Gastrocnemius medialis (tissue), 4 donors: ENCODE measurements at regions of chr6 and their contacts with region 1.

Region 1: DNA sequence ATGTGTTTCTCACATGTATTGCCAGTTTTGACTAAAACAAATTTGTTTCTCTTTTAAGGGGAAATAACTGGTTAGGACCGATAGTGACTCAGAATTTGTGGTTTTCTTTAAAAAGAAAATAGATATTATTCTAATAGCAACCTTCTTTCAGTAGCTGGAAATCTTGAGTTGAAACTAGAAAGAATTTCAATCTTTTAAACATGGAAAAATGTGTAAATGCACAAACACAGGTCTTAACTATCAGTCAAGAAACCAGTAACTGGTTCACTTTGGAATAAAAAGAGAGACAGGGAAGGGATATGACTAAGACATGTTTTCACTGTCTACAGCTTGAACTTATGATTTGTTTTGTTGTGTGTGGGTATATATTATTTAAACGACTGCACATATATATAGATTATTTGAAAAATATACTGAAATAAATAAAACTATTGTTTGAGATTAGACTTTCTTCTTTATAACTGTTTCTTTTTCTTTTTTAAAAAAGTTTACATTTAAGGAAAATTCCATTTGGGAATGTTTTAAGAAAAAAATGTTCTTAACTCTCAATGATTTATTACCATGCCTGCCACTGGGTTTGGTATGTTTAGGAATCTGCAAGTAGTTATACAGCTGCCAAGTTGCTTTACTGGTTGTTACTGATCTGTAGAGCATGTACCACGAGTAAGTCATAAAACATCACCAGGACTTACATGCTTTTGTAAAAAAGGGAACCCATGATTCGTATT is 753.3 kb upstream of the MARCKS start:
- DNase-seq: no peak
- ATAC-seq: no peak
- H3K4me3 ChIP-seq: no peak overlapping the region
- H3K27ac ChIP-seq: no peak overlapping the region
- H3K4me1 ChIP-seq: peaks cover 0 to 8% of the 10 kb centered on the region in 2 donors
- H3K27me3 ChIP-seq: no peaks in the 10 kb centered on the region
- CTCF ChIP-seq: no peak
- POLR2A ChIP-seq: no peak

Region 2: DNA sequence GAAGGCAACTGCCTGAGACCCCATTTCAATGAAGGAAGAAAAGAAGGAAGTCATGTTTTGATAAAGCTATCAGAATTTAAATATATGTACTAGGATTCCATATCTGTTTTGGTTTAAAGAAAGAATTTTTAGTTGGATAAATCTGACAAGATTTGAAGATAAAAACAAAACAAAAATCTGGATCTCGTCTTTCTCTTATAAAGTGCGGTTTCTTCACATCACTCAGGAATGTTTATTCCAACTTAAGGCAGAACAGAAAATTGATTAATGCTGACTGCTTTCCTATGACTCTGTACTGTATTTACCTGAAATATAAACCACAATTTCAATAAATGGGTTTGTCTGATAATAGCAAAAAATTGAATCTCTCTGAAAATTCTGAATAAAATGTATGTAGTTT is 317.0 kb before region 1 on chr6:
- in situ Hi-C with region 1: no loop called
- intact Hi-C with region 1: no loop called
- DNase-seq: no peak
- ATAC-seq: no peak
- H3K4me3 ChIP-seq: no peak overlapping the region
- H3K27ac ChIP-seq: no peak overlapping the region
- H3K4me1 ChIP-seq: no peaks in the 10 kb centered on the region
- H3K27me3 ChIP-seq: no peaks in the 10 kb centered on the region
- CTCF ChIP-seq: no peak
- POLR2A ChIP-seq: no peak

Region 3: GRCh38 chr6:112865120-112865519 is 238.7 kb before region 1 on chr6:
- in situ Hi-C with region 1: no loop called
- intact Hi-C with region 1: no loop called
- DNase-seq: no peak
- ATAC-seq: no peak
- H3K4me3 ChIP-seq: no peak overlapping the region
- H3K27ac ChIP-seq: no peak overlapping the region
- H3K4me1 ChIP-seq: no peaks in the 10 kb centered on the region
- H3K27me3 ChIP-seq: no peaks in the 10 kb centered on the region
- CTCF ChIP-seq: no peak
- POLR2A ChIP-seq: no peak

Region 4: GRCh38 chr6:112899541-112899940 is 204.3 kb before region 1 on chr6:
- in situ Hi-C with region 1: no loop called
- intact Hi-C with region 1: no loop called
- DNase-seq: no peak
- ATAC-seq: no peak
- H3K4me3 ChIP-seq: no peak overlapping the region
- H3K27ac ChIP-seq: no peak overlapping the region
- H3K4me1 ChIP-seq: no peaks in the 10 kb centered on the region
- H3K27me3 ChIP-seq: no peaks in the 10 kb centered on the region
- CTCF ChIP-seq: no peak
- POLR2A ChIP-seq: no peak

Region 5: GRCh38 chr6:113129991-113130390 is 26.2 kb after region 1 on chr6:
- in situ Hi-C with region 1: no loop called
- intact Hi-C with region 1: loop called (anchors 2 kb)
- DNase-seq: no peak
- ATAC-seq: no peak
- H3K4me3 ChIP-seq: no peak overlapping the region
- H3K27ac ChIP-seq: no peak overlapping the region
- H3K4me1 ChIP-seq: no peaks in the 10 kb centered on the region
- H3K27me3 ChIP-seq: no peaks in the 10 kb centered on the region
- CTCF ChIP-seq: no peak
- POLR2A ChIP-seq: no peak